ENCODE measurements at regions of chr5 and their contacts with region 1.

Region 1: GRCh38 chr5:132526290-132526973 is 16.9 kb downstream of the IL5 start:
- DNase-seq: peak; percentile 54
- ATAC-seq: peak; percentile 70
- H3K4me3 Mint-ChIP-seq: no peak overlapping the region
- H3K27ac Mint-ChIP-seq: peak overlapping the region; percentile 48
- H3K4me1 Mint-ChIP-seq: peaks cover 46% of the 10 kb centered on the region
- H3K27me3 Mint-ChIP-seq: no peaks in the 10 kb centered on the region

Region 2: DNA sequence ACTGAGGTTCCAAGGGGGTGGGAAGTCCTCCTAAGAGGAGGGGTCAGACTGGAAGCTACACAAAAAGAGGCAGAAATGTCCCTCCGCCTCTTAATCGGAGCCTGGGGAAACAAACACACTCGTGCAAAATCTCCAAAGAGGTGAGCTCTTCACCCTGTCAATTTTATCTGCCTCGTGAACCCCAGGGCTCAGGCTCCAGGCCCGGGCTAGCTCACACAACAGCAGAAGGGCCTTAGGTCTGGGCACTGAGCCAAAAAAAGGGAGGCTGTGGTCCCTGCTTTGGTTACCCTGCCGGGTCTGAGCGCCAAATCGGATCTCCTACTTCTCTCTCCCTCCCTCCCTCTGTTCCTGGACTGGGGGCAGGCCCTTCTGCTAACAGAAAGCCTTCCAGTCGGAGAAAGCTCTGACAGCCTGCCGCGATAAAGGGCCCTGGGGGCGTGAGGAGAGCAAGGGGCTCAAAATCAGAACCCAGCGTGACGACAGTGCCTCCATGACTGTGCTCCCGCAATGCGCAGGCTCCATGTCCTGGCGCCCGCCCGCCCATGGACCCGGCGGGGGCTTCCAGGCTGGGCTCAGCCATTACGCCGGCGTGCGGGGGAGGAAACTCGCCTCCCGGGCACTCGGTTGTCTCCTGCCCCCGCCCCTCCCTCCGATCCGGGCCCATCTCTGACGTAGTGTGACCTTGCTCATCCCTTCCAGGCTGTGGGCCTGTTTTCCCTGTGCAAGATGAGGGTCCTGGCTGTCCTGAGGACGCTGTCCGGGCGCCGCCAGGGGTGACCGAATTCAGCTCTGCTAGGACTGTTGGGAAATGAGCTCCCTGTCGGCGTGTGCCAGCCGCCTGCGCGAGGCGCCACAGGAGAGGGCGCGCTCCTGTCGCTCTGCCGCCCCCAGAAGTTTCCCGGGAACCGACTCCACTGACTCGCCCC is 233.1 kb before region 1 on chr5:
- CTCF ChIA-PET with region 1: no interaction called
- POLR2A ChIA-PET with region 1: no interaction called
- DNase-seq: peak; percentile 67
- ATAC-seq: peak; percentile 50
- H3K4me3 Mint-ChIP-seq: peak overlapping the region; percentile 86
- H3K27ac Mint-ChIP-seq: peak overlapping the region; percentile 79
- H3K4me1 Mint-ChIP-seq: peaks cover 25% of the 10 kb centered on the region
- H3K27me3 Mint-ChIP-seq: peaks cover 5% of the 10 kb centered on the region

Region 3: GRCh38 chr5:132386644-132387286 is 139.7 kb before region 1 on chr5:
- CTCF ChIA-PET with region 1: interaction called, 12 read pairs
- POLR2A ChIA-PET with region 1: no interaction called
- DNase-seq: peak; percentile 87
- ATAC-seq: peak; percentile 93
- H3K4me3 Mint-ChIP-seq: no peak overlapping the region
- H3K27ac Mint-ChIP-seq: peak overlapping the region; percentile 51
- H3K4me1 Mint-ChIP-seq: peaks cover 57% of the 10 kb centered on the region
- H3K27me3 Mint-ChIP-seq: no peaks in the 10 kb centered on the region

Region 4: GRCh38 chr5:132506094-132506692 is 20.2 kb before region 1 on chr5:
- CTCF ChIA-PET with region 1: interaction called, 15 read pairs
- POLR2A ChIA-PET with region 1: interaction called, 3 read pairs
- DNase-seq: peak; percentile 51
- ATAC-seq: peak; percentile 68
- H3K4me3 Mint-ChIP-seq: no peak overlapping the region
- H3K27ac Mint-ChIP-seq: no peak overlapping the region
- H3K4me1 Mint-ChIP-seq: peaks cover 14% of the 10 kb centered on the region
- H3K27me3 Mint-ChIP-seq: peaks cover 13% of the 10 kb centered on the region

Region 5: GRCh38 chr5:132546108-132546507 is 19.7 kb after region 1 on chr5:
- CTCF ChIA-PET with region 1: interaction called, 27 read pairs
- POLR2A ChIA-PET with region 1: no interaction called
- DNase-seq: no peak
- ATAC-seq: no peak
- H3K4me3 Mint-ChIP-seq: no peak overlapping the region
- H3K27ac Mint-ChIP-seq: no peak overlapping the region
- H3K4me1 Mint-ChIP-seq: peaks cover 12% of the 10 kb centered on the region
- H3K27me3 Mint-ChIP-seq: no peaks in the 10 kb centered on the region

Region 6: DNA sequence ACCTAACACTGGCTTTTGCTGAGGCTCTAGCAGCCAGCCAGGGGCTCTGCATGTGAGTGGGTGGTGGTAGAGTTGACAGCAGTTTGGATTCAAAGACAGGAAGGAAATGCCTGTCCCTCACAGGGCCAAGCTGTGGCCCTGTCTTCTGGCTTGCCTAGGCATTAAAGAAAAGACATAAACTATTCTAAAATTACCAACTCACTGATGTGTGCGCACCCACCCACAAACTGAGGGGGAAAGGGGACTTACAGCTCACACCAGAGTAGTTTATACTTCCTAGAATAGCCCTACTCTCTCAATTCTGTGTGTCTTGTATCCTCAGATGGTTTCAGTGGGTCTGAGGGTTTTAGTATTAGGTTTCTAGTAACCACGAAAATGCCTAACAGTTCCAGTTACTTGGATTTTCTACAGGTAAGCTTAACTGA is 113.3 kb after region 1 on chr5:
- CTCF ChIA-PET with region 1: interaction called, 15 read pairs
- POLR2A ChIA-PET with region 1: no interaction called
- DNase-seq: peak; percentile 66
- ATAC-seq: peak; percentile 69
- H3K4me3 Mint-ChIP-seq: peak overlapping the region; percentile 26
- H3K27ac Mint-ChIP-seq: peak overlapping the region; percentile 91
- H3K4me1 Mint-ChIP-seq: peaks cover 86% of the 10 kb centered on the region
- H3K27me3 Mint-ChIP-seq: no peaks in the 10 kb centered on the region

Region 7: GRCh38 chr5:132714456-132715307 is 188.2 kb after region 1 on chr5:
- CTCF ChIA-PET with region 1: interaction called, 15 read pairs
- POLR2A ChIA-PET with region 1: no interaction called
- DNase-seq: no peak
- ATAC-seq: no peak
- H3K4me3 Mint-ChIP-seq: peak overlapping the region; percentile 3
- H3K27ac Mint-ChIP-seq: peak overlapping the region; percentile 29
- H3K4me1 Mint-ChIP-seq: peaks cover 17% of the 10 kb centered on the region
- H3K27me3 Mint-ChIP-seq: no peaks in the 10 kb centered on the region

Region 8: GRCh38 chr5:132829742-132830435 is 303.5 kb after region 1 on chr5:
- CTCF ChIA-PET with region 1: interaction called, 10 read pairs
- POLR2A ChIA-PET with region 1: interaction called, 4 read pairs
- DNase-seq: peak; percentile 81
- ATAC-seq: peak; percentile 88
- H3K4me3 Mint-ChIP-seq: peak overlapping the region; percentile 81
- H3K27ac Mint-ChIP-seq: peak overlapping the region; percentile 72
- H3K4me1 Mint-ChIP-seq: peaks cover 24% of the 10 kb centered on the region
- H3K27me3 Mint-ChIP-seq: peaks cover 31% of the 10 kb centered on the region